GM12878 (cell line): ENCODE measurements at regions of chr6 and their contacts with region 1.

Region 1: DNA sequence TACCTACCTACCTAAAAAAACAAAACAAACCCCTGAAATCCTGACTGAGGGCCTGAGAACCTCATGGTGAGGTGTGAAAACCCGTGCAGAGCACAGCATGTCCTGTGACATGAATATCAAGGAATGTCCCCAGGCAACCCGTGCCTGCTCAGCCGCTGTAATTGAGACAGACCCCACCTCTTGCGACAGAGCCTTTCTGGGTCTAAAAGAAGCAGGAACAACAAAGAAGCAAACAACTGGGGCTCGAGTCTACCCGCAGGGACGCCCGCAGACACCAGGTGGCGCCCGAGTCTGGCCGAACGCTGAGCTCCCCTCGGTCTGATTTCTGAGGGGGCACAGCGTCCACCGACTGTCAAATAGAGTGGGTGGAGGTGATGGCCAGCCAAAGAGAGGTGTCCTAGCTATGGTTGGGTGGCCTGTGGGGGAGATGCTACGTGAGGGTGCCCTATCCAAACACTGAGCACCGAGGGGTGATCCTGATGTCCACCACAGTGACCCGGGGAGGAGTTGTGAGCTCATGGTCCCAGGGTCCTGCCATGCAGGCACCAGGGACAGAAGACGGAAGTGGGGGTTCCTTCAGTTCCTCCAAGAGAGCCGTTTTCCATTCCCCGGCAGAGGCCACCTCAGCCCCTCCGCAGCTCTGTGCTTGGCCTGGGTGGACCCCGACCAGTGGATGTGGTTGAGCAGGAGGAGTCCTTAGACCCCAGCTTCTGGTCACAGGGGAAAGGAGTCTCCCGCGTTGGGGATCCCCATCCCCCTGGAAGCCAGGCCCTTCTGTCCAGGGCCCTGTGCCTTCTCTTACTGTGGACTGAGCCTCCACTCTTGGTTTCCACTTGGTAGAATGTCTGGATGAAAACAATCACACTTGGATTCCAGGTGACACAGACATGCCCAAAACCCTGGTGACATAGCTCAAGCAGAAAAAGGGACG is 268.2 kb downstream of the CDC5L start:
- DNase-seq: no peak
- ATAC-seq: peak; percentile 90
- H3K4me3 ChIP-seq: no peak overlapping the region
- H3K27ac ChIP-seq: no peak overlapping the region
- H3K4me1 ChIP-seq: no peaks in the 10 kb centered on the region; the same call in 1 of the 2 replicates
- H3K27me3 ChIP-seq: peaks cover 0 to 2% of the 10 kb centered on the region in 2 experiments; a peak in 1 of 4 replicates
- CTCF ChIP-seq: peak; percentile 90 to 92 (median 90)
- EP300 ChIP-seq: no peak
- POLR2A ChIP-seq: no peak
- RAD21 ChIP-seq: peak; percentile 92

Region 2: DNA sequence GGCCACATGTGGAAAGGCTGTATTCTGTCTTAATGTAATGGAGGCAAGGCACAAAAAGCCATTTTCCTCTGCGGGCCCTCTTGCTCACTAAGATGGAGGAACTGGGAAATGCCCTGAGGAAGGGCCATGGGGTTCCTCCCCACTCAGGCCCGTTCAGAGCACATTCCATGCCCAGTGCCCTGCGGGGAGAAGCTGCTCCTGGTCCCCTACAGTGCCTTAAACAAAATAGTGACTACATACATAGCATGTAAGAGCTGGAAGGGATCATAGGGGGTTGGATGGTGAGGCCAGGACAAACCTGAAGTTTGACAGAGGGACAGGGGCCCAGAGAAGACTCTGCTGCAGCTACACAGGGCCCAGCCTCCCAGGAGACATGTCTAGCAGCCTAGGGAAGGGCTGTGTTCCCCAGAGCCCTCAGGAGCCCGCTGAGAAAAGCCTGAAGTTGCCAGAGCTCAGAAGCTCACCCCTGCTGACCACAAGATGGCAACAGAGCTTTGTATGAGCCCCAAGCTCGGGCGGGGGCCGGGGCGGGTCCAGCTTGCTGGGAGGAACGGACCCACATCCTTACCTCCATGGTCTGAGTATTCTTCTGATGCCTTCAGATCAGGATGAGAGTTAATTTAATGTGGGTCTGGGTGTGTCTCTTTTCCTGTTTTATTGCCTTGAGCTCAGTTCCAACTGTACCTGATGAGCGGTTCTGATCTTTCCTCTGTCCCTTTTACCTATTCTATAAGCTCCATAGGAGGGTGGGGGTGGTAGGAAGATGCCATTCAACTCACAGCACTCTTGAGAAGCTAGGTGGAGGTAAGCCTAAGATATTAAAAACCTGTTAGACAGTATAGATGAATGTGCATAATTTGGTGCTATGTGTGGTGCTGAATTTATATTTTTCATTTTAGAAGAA is 25.3 kb before region 1 on chr6:
- CTCF ChIA-PET with region 1: interaction called, 9 read pairs
- POLR2A ChIA-PET with region 1: no interaction called
- RAD21 ChIA-PET with region 1: interaction called, 6 read pairs
- SMC1A ChIA-PET with region 1: interaction called, 10 read pairs
- in situ Hi-C with region 1: no loop called
- intact Hi-C with region 1: no loop called
- DNase-seq: no peak
- ATAC-seq: peak; percentile 88
- H3K4me3 ChIP-seq: no peak overlapping the region
- H3K27ac ChIP-seq: no peak overlapping the region
- H3K4me1 ChIP-seq: no peaks in the 10 kb centered on the region
- H3K27me3 ChIP-seq: peaks cover 1 to 3% of the 10 kb centered on the region in 2 experiments; a peak in 2 of 4 replicates
- CTCF ChIP-seq: peak; percentile 33 to 59 (median 49); a peak in 5 of 6 replicates
- EP300 ChIP-seq: no peak
- POLR2A ChIP-seq: no peak
- RAD21 ChIP-seq: peak; percentile 36; the same call in 1 of the 2 replicates

Region 3: GRCh38 chr6:45075246-45075645 is 419.6 kb after region 1 on chr6:
- CTCF ChIA-PET with region 1: interaction called, 5 read pairs
- POLR2A ChIA-PET with region 1: no interaction called
- RAD21 ChIA-PET with region 1: no interaction called
- SMC1A ChIA-PET with region 1: no interaction called
- in situ Hi-C with region 1: no loop called
- intact Hi-C with region 1: loop called (anchors 10 kb)
- DNase-seq: no peak
- ATAC-seq: no peak
- H3K4me3 ChIP-seq: no peak overlapping the region
- H3K27ac ChIP-seq: no peak overlapping the region
- H3K4me1 ChIP-seq: no peaks in the 10 kb centered on the region
- H3K27me3 ChIP-seq: no peaks in the 10 kb centered on the region
- CTCF ChIP-seq: no peak
- EP300 ChIP-seq: no peak
- POLR2A ChIP-seq: no peak
- RAD21 ChIP-seq: no peak

Region 4: GRCh38 chr6:45377554-45378333 is 722.1 kb after region 1 on chr6 and contains the start of gene SUPT3H:
- CTCF ChIA-PET with region 1: interaction called, 22 read pairs
- POLR2A ChIA-PET with region 1: interaction called, 3 read pairs
- RAD21 ChIA-PET with region 1: interaction called, 9 read pairs
- SMC1A ChIA-PET with region 1: interaction called, 5 read pairs
- in situ Hi-C with region 1: no loop called
- intact Hi-C with region 1: loop called (anchors 5 kb)
- DNase-seq: peak; percentile 56
- ATAC-seq: peak; percentile 95
- H3K4me3 ChIP-seq: peak within 1 kb of the TSS; percentile 69
- H3K27ac ChIP-seq: peak within 1 kb of the TSS; percentile 80
- H3K4me1 ChIP-seq: no peaks in the 10 kb centered on the region; the same call in 1 of the 2 replicates
- H3K27me3 ChIP-seq: peaks cover 0 to 2% of the 10 kb centered on the region in 2 experiments; a peak in 1 of 4 replicates
- CTCF ChIP-seq: peak in 1 of 3 experiments; percentile 27; a peak in 1 of 6 replicates
- EP300 ChIP-seq: 0 out of 4 replicates have a peak, but pooled peaks of 1 of the 2 experiments have one; percentile 7
- POLR2A ChIP-seq: peak; percentile 79
- RAD21 ChIP-seq: no peak
- polyA plus RNA-seq, gene SUPT3H: 2.8 TPM